SK-N-SH (cell line): ENCODE measurements at regions of chr1 and their contacts with region 1.

Region 1: GRCh38 chr1:18575620-18576019 is 55.0 kb upstream of the PAX7 start:
- DNase-seq: peak; percentile 80
- H3K4me3 ChIP-seq: no peak overlapping the region; a peak in 1 of 4 replicates
- H3K27ac ChIP-seq: no peak overlapping the region
- H3K4me1 ChIP-seq: no peaks in the 10 kb centered on the region
- H3K27me3 ChIP-seq: no peaks in the 10 kb centered on the region
- CTCF ChIP-seq: peak; percentile 66
- EP300 ChIP-seq: no peak
- RAD21 ChIP-seq: peak; percentile 78

Region 2: DNA sequence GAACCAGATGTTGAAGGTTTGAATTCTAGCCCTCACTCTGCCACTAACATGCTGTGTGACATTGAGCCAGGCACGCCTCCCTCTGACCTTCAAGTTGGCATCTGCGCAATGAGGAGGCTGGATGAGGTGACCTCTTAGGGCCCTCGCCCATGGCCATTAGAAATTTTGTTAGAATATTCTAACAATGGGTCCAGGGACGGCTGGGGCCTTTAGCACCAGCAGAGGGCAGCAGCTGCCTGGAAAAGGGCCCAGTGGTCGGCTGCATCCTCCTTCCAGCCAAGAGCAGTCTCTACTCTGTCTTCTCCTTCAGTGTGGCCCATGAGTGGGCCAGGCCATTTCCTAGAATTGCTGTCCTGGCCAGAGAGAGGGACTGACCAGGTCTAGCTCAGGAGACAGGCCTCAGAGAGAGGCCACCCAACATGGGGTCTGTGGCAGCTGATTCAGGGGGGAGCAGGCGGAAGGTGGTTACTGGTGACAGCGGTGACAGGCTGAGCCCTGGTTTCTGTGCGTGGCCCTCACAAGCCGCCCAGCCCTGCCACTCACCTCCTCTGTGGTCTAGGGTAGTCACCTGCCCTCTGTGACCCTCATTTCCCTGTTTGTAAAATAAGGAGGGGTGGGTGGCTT is 921.8 kb before region 1 on chr1:
- CTCF ChIA-PET with region 1: interaction called, 33 read pairs
- POLR2A ChIA-PET with region 1: no interaction called
- DNase-seq: peak; percentile 85
- H3K4me3 ChIP-seq: no peak overlapping the region; a peak in 1 of 4 replicates
- H3K27ac ChIP-seq: no peak overlapping the region
- H3K4me1 ChIP-seq: peaks cover 0 to 6% of the 10 kb centered on the region in 2 experiments; a peak in 1 of 4 replicates
- H3K27me3 ChIP-seq: no peaks in the 10 kb centered on the region
- CTCF ChIP-seq: peak; percentile 79
- EP300 ChIP-seq: no peak
- RAD21 ChIP-seq: peak; percentile 84

Region 3: DNA sequence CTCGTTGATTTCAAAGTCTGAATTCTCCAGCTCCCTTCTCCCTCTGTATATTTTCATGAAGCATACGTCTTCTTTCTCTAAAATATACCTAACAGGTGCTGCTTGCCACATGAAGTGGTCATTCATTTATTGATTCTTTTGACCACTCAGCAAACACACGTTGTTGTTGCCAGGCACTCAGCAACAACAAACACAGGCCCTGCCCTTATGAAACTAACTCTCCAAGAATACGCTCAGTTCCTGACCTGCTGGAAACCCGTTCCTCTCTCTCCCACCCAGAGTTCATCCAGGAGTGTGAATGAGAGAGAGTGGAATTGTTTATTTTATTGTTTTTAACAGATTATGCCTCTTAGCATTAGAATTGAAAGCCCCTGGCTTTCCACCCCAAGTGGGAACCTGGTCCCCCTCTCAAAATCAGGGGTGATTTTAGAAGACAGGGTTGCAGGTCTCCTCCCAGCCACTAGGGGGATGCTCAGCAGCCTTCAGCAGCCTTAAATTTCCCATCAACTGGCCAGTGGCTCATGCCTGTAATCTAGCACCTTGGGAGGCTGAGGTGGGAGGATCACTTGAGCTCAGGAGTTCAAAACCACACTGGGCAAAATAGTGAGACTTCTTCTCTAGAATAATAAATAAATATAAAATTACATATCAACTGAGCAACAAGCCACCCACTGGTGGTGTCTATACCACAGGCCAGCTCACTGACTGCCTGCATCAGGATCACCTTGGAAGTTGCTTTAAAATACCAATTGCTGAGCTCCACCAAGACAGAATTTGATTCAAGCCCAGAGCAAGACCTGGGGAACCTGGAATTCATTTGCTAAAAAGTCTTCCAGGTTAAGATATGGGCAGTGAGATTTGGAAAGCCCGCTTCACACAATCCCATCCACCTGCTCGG is 275.9 kb before region 1 on chr1:
- CTCF ChIA-PET with region 1: interaction called, 30 read pairs
- POLR2A ChIA-PET with region 1: no interaction called
- DNase-seq: peak; percentile 73
- H3K4me3 ChIP-seq: no peak overlapping the region; a peak in 1 of 4 replicates
- H3K27ac ChIP-seq: no peak overlapping the region
- H3K4me1 ChIP-seq: peaks cover 0 to 4% of the 10 kb centered on the region in 2 experiments; a peak in 1 of 4 replicates
- H3K27me3 ChIP-seq: no peaks in the 10 kb centered on the region
- CTCF ChIP-seq: peak; percentile 41
- EP300 ChIP-seq: no peak
- RAD21 ChIP-seq: peak; percentile 58

Region 4: GRCh38 chr1:18322368-18323032 is 253.1 kb before region 1 on chr1:
- CTCF ChIA-PET with region 1: interaction called, 17 read pairs
- POLR2A ChIA-PET with region 1: no interaction called
- DNase-seq: peak; percentile 58
- H3K4me3 ChIP-seq: no peak overlapping the region
- H3K27ac ChIP-seq: no peak overlapping the region
- H3K4me1 ChIP-seq: peaks cover 0 to 21% of the 10 kb centered on the region in 2 experiments; a peak in 1 of 4 replicates
- H3K27me3 ChIP-seq: no peaks in the 10 kb centered on the region
- CTCF ChIP-seq: no peak
- EP300 ChIP-seq: no peak
- RAD21 ChIP-seq: no peak; the same call in 1 of the 2 replicates

Region 5: DNA sequence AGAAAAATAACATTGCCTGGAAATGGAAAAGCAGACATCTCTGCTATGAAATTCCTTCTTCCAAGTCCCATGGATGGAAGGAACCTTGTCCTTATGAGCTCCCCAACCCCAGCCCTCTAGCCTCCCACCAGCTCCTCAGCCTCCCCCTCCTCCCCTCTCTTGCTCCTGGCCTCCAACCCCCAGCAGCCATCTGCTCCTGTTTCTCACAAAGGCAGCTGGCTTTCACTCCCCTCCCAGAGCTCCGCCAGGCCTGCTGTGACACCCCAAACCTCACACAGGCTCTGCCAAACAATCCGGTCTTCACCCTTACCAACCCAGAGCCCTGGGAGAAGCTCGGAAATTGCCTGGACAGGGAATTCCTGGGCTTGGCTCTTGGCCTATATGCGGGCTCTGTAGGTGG is 25.7 kb before region 1 on chr1:
- CTCF ChIA-PET with region 1: interaction called, 110 read pairs
- POLR2A ChIA-PET with region 1: no interaction called
- DNase-seq: no peak
- H3K4me3 ChIP-seq: no peak overlapping the region
- H3K27ac ChIP-seq: no peak overlapping the region
- H3K4me1 ChIP-seq: no peaks in the 10 kb centered on the region; a peak in 1 of 4 replicates
- H3K27me3 ChIP-seq: no peaks in the 10 kb centered on the region
- CTCF ChIP-seq: no peak
- EP300 ChIP-seq: no peak
- RAD21 ChIP-seq: no peak

Region 6: DNA sequence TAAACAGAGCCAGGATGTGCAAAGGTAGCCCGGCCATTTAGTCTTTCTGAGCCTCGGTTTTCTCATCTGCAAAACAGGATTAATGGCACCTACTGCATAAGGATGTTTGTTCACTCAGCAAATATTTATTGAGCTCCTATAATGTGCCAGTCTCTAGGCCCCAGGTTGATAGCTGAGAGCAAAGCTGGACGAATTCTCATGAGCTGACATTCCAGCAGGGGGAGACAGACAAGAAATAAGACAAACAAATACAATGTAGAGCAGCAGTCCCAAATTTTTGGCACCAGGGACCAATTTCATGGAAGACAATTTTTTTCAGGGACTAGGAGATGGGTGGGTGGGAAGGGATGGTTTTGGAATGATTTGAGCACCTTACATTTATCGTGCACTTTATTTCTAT is 19.3 kb before region 1 on chr1:
- CTCF ChIA-PET with region 1: interaction called, 110 read pairs
- POLR2A ChIA-PET with region 1: no interaction called
- DNase-seq: peak; percentile 42
- H3K4me3 ChIP-seq: no peak overlapping the region; a peak in 1 of 4 replicates
- H3K27ac ChIP-seq: no peak overlapping the region
- H3K4me1 ChIP-seq: no peaks in the 10 kb centered on the region
- H3K27me3 ChIP-seq: no peaks in the 10 kb centered on the region; the same call in 1 of the 2 replicates
- CTCF ChIP-seq: peak; percentile 44
- EP300 ChIP-seq: no peak
- RAD21 ChIP-seq: peak; percentile 26

Region 7: DNA sequence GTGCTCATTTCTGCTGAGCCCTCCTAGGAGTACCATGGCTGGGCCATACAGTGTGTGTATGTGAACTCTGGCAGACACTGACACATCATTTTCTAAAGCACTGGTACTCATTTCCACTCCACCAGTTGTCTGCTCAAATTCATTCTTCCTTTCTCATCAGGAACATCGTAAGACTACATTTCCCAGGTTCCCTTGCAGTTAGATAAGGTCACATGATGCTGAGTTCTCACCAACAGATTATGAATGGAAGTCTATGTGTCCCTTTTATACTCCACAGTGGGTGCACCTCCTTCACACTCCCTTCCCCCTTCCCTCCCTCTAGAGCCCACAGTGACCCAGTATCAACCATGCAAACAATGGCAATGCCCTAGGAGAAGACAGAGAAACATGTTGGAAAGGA is 16.7 kb after region 1 on chr1:
- CTCF ChIA-PET with region 1: interaction called, 35 read pairs
- POLR2A ChIA-PET with region 1: no interaction called
- DNase-seq: no peak
- H3K4me3 ChIP-seq: no peak overlapping the region
- H3K27ac ChIP-seq: no peak overlapping the region
- H3K4me1 ChIP-seq: no peaks in the 10 kb centered on the region
- H3K27me3 ChIP-seq: no peaks in the 10 kb centered on the region; the same call in 1 of the 2 replicates
- CTCF ChIP-seq: no peak
- EP300 ChIP-seq: no peak
- RAD21 ChIP-seq: no peak